Calu3 (cell line): ENCODE measurements at regions of chr6 and their contacts with region 1.

Region 1: GRCh38 chr6:106300944-106301343 is 24.6 kb downstream of the ATG5 start:
- DNase-seq: no peak
- H3K4me3 Mint-ChIP-seq: no peak overlapping the region
- H3K27ac Mint-ChIP-seq: no peak overlapping the region
- H3K4me1 Mint-ChIP-seq: peaks cover 7% of the 10 kb centered on the region
- H3K27me3 Mint-ChIP-seq: no peaks in the 10 kb centered on the region
- CTCF ChIP-seq: no peak

Region 2: GRCh38 chr6:106085984-106086813 is 214.7 kb before region 1 on chr6 and contains the start of gene PRDM1:
- CTCF ChIA-PET with region 1: no interaction called
- intact Hi-C with region 1: loop called (anchors 5 kb)
- DNase-seq: peak; percentile 89
- H3K4me3 Mint-ChIP-seq: peak within 1 kb of the TSS; percentile 97
- H3K27ac Mint-ChIP-seq: peak within 1 kb of the TSS; percentile 57
- H3K4me1 Mint-ChIP-seq: peaks cover 28% of the 10 kb centered on the region
- H3K27me3 Mint-ChIP-seq: peaks cover 27% of the 10 kb centered on the region
- CTCF ChIP-seq: no peak
- total RNA-seq, gene PRDM1: 0.40 and 1.1 TPM in 2 replicates

Region 3: GRCh38 chr6:106194949-106195921 is 105.7 kb before region 1 on chr6:
- CTCF ChIA-PET with region 1: no interaction called
- intact Hi-C with region 1: no loop called
- DNase-seq: no peak
- H3K4me3 Mint-ChIP-seq: no peak overlapping the region
- H3K27ac Mint-ChIP-seq: peak overlapping the region; percentile 81
- H3K4me1 Mint-ChIP-seq: peaks cover 9% of the 10 kb centered on the region
- H3K27me3 Mint-ChIP-seq: no peaks in the 10 kb centered on the region
- CTCF ChIP-seq: no peak

Region 4: DNA sequence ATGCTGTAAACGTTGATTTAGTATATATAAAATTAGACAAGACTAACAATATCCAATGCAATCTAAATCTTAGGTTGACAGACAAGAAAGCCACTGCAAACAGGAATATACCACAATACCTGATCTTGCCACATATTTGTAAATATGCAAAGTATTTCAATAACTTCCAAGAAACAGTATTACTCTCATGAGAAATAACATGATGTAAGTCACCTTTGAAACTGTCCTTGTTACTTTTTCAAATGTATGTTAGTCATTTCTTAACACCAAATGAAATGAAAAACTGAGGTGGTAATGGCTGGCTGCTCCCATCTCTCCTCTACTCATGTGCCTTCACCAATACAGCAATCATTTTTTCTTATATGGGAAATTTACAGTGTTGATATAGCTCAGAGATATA is 94.0 kb before region 1 on chr6:
- CTCF ChIA-PET with region 1: no interaction called
- intact Hi-C with region 1: no loop called
- DNase-seq: no peak
- H3K4me3 Mint-ChIP-seq: no peak overlapping the region
- H3K27ac Mint-ChIP-seq: no peak overlapping the region
- H3K4me1 Mint-ChIP-seq: no peaks in the 10 kb centered on the region
- H3K27me3 Mint-ChIP-seq: no peaks in the 10 kb centered on the region
- CTCF ChIP-seq: no peak

Region 5: DNA sequence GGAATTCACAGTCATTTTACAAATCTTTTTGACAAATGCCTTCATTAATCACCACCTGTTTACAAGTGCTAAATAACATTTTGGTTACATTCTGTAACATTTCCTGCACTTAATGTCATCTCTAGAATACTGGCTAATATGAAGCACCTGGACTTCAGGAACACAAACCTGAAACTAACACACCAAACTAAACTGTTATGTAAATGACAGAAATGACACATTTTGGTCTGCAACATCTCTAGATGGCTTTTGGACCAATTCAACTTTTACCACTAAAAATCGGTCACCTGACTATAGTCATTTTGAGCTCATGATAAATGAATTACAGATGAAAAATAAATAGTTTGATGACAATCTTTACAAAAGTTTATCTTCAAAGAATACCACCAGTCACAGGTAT is 56.0 kb before region 1 on chr6:
- CTCF ChIA-PET with region 1: no interaction called
- intact Hi-C with region 1: loop called (anchors 5 kb)
- DNase-seq: no peak
- H3K4me3 Mint-ChIP-seq: no peak overlapping the region
- H3K27ac Mint-ChIP-seq: no peak overlapping the region
- H3K4me1 Mint-ChIP-seq: no peaks in the 10 kb centered on the region
- H3K27me3 Mint-ChIP-seq: no peaks in the 10 kb centered on the region
- CTCF ChIP-seq: no peak

Region 6: GRCh38 chr6:106411643-106412200 is 110.8 kb after region 1 on chr6:
- CTCF ChIA-PET with region 1: no interaction called
- intact Hi-C with region 1: no loop called
- DNase-seq: peak; percentile 6
- H3K4me3 Mint-ChIP-seq: no peak overlapping the region
- H3K27ac Mint-ChIP-seq: no peak overlapping the region
- H3K4me1 Mint-ChIP-seq: peaks cover 11% of the 10 kb centered on the region
- H3K27me3 Mint-ChIP-seq: no peaks in the 10 kb centered on the region
- CTCF ChIP-seq: no peak